Activated T-helper 1 cell treated with anti-CD3 and anti-CD28 coated beads, Interleukin-12 subunit alpha, Interleukin-12 subunit beta, Interleukin-2, Interleukin-4 antibody, amounts not matched to agents 30 ng/mL and 10 ng/mL and 1 ng/mL, durations not matched to agents 14 hours and 24 hours and 36 hours (primary cell): ENCODE measurements at regions of chr10 and their contacts with region 1.

Region 1: DNA sequence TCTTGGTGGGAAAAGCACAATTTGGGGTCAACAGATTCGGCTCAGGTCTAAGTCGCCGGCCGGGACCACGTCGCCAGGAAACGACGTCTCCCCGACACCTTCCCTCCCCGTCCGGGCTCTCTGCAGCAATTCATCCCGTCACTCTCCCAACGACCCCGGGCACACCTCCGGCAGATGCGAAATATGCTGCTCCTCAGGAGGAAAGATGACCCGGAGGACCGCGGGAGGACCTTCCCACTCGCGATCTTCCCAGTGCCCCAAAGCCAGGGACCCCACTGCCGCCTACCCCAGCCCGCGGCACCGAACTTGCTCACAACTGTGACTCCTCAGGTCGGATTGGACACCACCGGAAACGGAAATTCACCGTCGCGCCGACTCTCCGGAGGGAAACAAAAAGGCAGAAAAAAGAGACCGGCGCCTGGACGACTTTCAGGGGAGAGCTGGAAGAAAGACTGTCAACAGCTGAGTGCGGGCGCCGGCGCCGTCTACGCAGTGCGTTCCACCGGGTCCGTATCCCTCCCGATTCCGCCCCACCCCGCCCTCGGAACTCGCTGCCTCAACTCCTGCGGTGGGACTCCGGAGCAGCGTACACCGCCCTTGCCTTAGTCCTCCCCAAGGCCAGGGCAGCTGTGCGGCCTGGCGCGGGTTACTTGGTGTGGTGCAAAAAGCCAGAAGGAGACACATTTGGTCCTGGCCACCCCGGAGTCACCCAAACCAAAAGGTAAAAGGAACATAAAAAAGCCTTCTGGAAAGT is 13.8 kb upstream of the SEC24C start:
- DNase-seq: peak; percentile 92
- H3K4me3 Mint-ChIP-seq: peak overlapping the region; percentile 95
- H3K27ac Mint-ChIP-seq: peak overlapping the region; percentile 97
- H3K4me1 Mint-ChIP-seq: peaks cover 10% of the 10 kb centered on the region
- H3K27me3 Mint-ChIP-seq: peaks cover 2% of the 10 kb centered on the region

Region 2: DNA sequence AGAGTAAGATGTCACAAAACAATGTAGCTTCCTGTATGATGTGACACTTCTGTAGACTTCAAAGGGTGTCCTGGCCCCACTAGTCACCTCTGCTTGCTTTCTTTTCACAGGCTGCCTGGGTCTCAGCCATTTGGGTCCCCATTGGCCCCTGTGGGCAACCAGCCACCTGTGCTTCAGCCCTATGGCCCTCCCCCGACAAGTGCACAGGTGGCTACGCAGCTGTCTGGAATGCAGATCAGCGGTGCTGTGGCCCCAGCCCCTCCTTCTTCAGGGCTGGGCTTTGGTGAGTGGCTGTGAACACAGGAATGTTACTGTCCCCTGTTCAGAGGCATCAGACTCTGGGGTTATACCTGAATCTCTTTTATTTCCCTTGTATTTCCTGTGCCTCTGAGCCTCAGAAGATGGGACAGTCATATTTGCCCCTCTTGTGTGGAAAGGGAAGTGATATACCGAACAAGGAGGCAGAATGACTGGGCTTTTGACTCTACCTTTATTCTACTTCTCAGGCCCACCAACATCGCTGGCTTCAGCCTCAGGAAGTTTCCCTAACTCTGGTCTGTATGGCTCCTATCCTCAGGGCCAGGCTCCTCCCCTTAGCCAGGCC is 29.3 kb after region 1 on chr10:
- intact Hi-C with region 1: loop called (anchors 1 kb)
- DNase-seq: peak; percentile 28
- H3K4me3 Mint-ChIP-seq: peak overlapping the region; percentile 6
- H3K27ac Mint-ChIP-seq: peak overlapping the region; percentile 79
- H3K4me1 Mint-ChIP-seq: peaks cover 49% of the 10 kb centered on the region
- H3K27me3 Mint-ChIP-seq: no peaks in the 10 kb centered on the region

Region 3: DNA sequence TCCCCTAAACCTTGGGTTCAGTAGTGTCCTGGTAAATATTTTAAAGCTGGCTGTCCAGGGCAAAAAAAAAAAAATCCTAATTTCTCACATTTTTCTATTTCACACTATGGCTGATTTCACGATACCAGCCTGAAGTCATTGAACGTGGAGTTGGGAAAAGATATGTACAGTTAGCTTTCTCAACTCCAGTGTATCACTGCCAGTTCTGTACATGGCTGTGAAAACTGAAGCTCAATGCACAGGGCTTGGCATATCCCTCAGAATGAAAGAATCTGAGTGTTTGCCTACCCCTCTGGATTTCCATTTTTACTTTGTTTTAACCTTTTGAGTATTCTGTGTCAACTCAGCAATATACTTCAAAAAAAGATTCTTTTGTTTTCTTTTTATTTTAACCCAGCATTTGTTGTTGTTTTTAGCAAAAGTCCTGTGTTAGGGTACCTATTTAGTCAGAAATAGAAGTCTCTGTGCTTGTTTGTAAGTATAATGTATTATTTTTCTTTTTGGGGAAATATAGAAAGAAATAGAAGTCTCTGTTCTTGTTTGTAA is 695.2 kb after region 1 on chr10:
- intact Hi-C with region 1: no loop called
- DNase-seq: no peak
- H3K4me3 Mint-ChIP-seq: no peak overlapping the region
- H3K27ac Mint-ChIP-seq: no peak overlapping the region
- H3K4me1 Mint-ChIP-seq: no peaks in the 10 kb centered on the region
- H3K27me3 Mint-ChIP-seq: no peaks in the 10 kb centered on the region